ENCODE measurements at regions of chr12 and their contacts with region 1.

Region 1: GRCh38 chr12:52082988-52083637 is 3.6 kb downstream of the SMIM41 start:
- DNase-seq: peak; percentile 46 to 69 (median 67)
- H3K4me3 ChIP-seq: no peak overlapping the region
- H3K27ac ChIP-seq: no peak overlapping the region
- H3K4me1 ChIP-seq: peaks cover 0 to 16% (median 13%) of the 10 kb centered on the region in 4 experiments
- H3K27me3 ChIP-seq: peaks cover 0 to 21% (median 9%) of the 10 kb centered on the region in 5 experiments

Region 2: DNA sequence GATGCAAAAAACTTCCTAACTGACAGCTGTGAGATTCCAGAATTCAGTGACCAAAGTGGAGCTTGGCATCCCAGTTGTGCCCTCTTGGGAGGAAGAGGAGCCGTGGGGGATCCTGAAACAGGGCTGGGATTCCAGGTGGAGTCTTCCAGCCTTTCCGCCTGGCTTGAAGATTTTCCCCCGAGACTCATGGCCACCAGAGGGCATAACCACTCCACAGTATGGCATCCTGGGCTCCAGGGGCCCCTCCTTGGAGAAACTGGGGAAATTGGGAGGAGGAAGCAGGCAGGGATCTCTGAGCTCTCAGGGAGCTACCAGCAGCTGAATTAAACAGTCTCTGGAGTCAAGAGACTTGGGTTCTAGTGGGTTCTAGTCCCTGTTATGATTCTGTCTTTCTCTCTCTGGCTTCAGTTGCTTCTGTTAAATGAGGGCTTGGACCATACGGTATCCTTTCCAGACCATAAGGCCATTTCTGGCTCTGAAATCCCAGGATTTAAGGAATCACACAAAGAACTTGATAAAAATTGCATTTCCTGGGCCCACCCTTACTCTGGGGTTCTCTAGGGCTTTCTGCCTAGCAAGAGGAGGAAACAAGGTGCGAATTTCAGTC is 79.0 kb before region 1 on chr12:
- CTCF ChIA-PET with region 1: interaction called, 12 read pairs
- POLR2A ChIA-PET with region 1: interaction called, 3 read pairs
- DNase-seq: no peak
- H3K4me3 ChIP-seq: no peak overlapping the region
- H3K27ac ChIP-seq: no peak overlapping the region
- H3K4me1 ChIP-seq: peaks cover 3 to 38% (median 32%) of the 10 kb centered on the region in 4 experiments
- H3K27me3 ChIP-seq: peaks cover 0 to 12% (median 8%) of the 10 kb centered on the region in 5 experiments

Region 3: DNA sequence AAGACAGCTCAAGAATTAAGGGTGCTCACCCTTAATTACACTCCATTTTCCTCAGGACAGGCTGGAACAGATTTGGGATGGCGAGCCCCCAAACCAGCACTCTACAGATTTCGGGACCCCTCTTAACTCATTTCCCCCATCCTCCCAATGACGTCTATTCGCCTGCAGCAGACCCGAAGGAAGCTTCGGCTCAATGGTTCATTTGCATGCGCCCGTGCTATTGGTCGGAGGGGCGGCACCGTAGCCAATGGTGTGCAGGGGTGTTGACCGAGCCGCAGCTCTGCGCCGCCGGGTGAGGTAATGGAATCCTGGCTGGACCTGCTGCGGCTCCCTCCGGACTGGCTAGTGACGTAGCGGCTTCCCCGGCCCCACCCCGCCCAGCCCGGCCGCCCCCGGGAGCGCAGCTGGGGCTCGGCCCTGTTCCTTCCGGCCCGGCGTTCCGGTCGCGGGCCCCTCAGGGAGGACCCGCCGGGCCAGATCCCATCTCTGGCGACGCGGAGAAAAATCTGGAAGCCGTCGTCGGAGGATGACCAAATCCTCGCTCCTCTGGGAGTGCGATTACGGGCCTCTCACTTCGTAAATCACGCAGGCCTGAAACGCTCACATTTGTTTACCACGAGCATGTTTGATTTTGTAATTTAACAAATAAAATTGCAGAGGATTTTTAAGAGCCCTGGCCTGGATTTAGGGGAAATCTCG is 50.2 kb before region 1 on chr12:
- CTCF ChIA-PET with region 1: interaction called, 661 read pairs
- POLR2A ChIA-PET with region 1: interaction called, 4 read pairs
- DNase-seq: peak; percentile 90 to 95 (median 93)
- H3K4me3 ChIP-seq: peak overlapping the region in 6 of 7 experiments; percentile 44 to 71 (median 56)
- H3K27ac ChIP-seq: peak overlapping the region in 1 of 2 experiments; percentile 43
- H3K4me1 ChIP-seq: peaks cover 0 to 36% (median 29%) of the 10 kb centered on the region in 4 experiments
- H3K27me3 ChIP-seq: peaks cover 0 to 33% (median 9%) of the 10 kb centered on the region in 5 experiments

Region 4: GRCh38 chr12:52069327-52070184 is 13.6 kb before region 1 on chr12 and contains the start of gene ATG101:
- CTCF ChIA-PET with region 1: interaction called, 65 read pairs
- POLR2A ChIA-PET with region 1: interaction called, 7 read pairs
- DNase-seq: peak; percentile 96 to 98 (median 97)
- H3K4me3 ChIP-seq: peak within 1 kb of the TSS; percentile 69 to 99 (median 93)
- H3K27ac ChIP-seq: peak within 1 kb of the TSS; percentile 95 to 98
- H3K4me1 ChIP-seq: peaks cover 4 to 19% (median 18%) of the 10 kb centered on the region in 4 experiments
- H3K27me3 ChIP-seq: no peaks in the 10 kb centered on the region

Region 5: DNA sequence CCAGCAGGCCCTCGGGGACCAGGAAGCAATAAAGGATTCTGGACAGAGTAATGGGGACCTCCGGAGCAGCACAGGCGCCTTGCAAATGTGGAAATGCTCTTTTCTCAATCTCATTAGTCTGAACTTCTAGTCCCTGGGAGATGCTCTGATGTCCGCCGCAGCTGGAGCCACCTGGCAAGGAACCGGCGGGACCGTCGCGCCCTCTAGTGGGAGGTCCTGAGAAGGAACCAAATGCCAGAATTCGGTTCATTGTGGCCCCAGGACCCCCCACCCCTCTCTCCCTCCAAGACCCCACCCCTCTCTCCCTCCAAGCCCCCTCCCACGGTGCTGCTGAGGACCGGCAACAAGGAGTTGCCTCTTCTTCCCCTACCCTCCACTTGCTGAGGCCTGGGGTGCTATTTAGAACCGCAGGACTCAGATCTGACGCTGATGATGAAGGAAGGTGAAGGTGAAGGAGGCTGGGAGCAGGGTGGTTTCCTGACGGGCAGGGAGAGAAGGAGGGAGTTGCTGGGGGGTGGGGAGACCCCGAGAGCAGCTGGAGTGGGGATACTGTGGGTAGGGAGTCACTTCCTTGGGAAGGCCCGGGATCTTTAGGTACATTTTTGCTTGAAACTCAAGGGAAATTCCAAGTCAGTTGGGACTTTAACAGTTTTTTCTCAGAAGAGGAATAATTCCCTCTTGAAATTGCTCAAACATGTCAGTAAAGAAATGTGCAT is 38.9 kb after region 1 on chr12:
- CTCF ChIA-PET with region 1: interaction called, 11 read pairs
- POLR2A ChIA-PET with region 1: no interaction called
- DNase-seq: peak; percentile 42 to 67 (median 63)
- H3K4me3 ChIP-seq: no peak overlapping the region
- H3K27ac ChIP-seq: no peak overlapping the region
- H3K4me1 ChIP-seq: peaks cover 0 to 15% (median 4%) of the 10 kb centered on the region in 4 experiments
- H3K27me3 ChIP-seq: peaks cover 0 to 26% (median 7%) of the 10 kb centered on the region in 5 experiments